Naive thymus-derived CD8-positive, alpha-beta T cell (primary cell): ENCODE measurements at regions of chr10 and their contacts with region 1.

Region 1: DNA sequence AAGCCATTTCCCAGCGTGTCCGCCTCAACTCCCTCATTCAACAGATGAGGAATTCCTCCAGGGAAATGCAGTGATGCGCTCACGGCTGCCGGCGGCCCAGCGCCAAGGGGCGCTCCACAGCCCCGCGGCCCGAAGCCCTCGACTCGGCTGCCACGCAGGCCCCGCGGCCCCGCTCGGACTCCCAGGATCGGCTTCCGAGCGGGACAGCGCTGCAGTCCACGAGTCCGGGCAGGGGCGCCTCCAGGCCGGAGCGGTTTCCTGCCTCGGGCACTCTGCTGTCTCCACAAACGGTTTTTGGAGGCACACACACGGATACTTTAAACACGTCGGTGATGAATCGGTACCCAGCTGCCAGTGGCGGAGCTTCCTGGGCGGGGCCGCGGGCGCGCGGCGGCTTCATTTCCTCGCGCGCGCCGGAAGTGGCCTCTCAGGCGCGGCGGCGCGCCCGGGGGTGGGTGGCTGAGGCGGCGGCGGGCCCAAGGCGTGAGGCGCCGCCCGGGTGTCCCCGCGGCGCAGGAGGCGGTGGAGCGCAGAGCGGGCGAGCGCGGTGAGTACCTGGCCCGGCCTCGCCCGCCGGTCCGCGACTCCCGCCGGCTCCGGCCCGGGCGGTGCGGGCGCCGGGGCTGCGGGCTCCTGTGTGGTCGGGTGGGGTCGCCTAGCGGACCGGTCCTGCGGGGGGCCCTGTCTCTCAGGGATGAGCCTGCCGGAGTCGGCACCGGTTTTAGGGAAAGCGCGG is at the start of gene CSGALNACT2:
- DNase-seq: peak; percentile 79 to 91 (median 86)
- ATAC-seq: peak; percentile 73 to 77
- H3K4me3 Mint-ChIP-seq: peak within 1 kb of the TSS; percentile 93 to 99 (median 97)
- H3K27ac Mint-ChIP-seq: peak within 1 kb of the TSS; percentile 93 to 100 (median 99)
- H3K4me1 Mint-ChIP-seq: peaks cover 25 to 64% (median 52%) of the 10 kb centered on the region in 4 donors
- H3K27me3 Mint-ChIP-seq: no peaks in the 10 kb centered on the region
- polyA plus RNA-seq, gene CSGALNACT2: 15.0 to 20.0 (median 16.2) TPM

Region 2: GRCh38 chr10:42782446-42783180 is 355.6 kb before region 1 on chr10 and contains the start of gene BMS1:
- POLR2A ChIA-PET with region 1: interaction called, 18 read pairs
- DNase-seq: peak; percentile 66 to 93 (median 89)
- ATAC-seq: peak; percentile 92 to 93
- H3K4me3 Mint-ChIP-seq: peak within 1 kb of the TSS; percentile 88 to 99 (median 98)
- H3K27ac Mint-ChIP-seq: peak within 1 kb of the TSS; percentile 91 to 99 (median 96)
- H3K4me1 Mint-ChIP-seq: peaks cover 13 to 48% (median 41%) of the 10 kb centered on the region in 4 donors
- H3K27me3 Mint-ChIP-seq: peaks cover 0 to 5% (median 0%) of the 10 kb centered on the region in 5 donors
- polyA plus RNA-seq, gene BMS1: 9.4 to 19.3 (median 13.6) TPM

Region 3: GRCh38 chr10:43039624-43040481 is 98.3 kb before region 1 on chr10:
- POLR2A ChIA-PET with region 1: no interaction called
- DNase-seq: peak in 1 of 10 donors; percentile 12
- ATAC-seq: peak; percentile 20 to 49
- H3K4me3 Mint-ChIP-seq: no peak overlapping the region
- H3K27ac Mint-ChIP-seq: no peak overlapping the region
- H3K4me1 Mint-ChIP-seq: peaks cover 0 to 15% (median 9%) of the 10 kb centered on the region in 4 donors
- H3K27me3 Mint-ChIP-seq: peaks cover 0 to 3% (median 0%) of the 10 kb centered on the region in 5 donors

Region 4: DNA sequence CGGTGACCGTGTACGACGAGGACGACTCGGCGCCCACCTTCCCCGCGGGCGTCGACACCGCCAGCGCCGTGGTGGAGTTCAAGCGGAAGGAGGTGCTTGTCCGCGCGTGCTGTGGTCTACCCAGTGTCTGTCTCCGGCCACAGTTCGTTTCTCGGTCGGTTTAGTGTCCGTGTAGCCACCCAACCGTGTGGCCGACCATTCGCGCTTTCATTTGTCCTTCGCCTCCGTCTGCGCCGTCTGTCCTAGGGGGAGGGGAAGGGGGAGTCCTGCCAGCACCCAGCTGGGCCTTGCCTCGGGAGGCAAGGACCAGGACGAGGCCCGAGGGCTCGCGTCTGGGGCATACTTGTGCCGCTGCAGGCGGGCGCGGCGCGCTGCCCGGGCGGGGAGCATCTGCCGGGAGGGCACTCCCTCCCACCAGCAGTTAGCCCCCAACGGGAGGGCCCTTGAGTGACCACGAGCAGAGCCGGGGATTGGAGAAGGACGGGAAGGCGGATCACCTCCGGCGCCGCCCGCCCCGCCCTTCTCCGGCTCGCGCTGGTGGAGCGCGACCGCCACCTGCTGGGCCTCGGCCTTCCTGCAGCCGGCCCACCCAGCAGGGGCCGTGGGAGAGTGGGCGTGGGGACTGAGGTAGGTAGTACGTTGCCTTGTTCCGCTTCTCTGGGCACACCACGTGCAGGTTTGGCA is 32.9 kb before region 1 on chr10:
- POLR2A ChIA-PET with region 1: no interaction called
- DNase-seq: peak; percentile 55 to 82 (median 78)
- ATAC-seq: peak; percentile 95
- H3K4me3 Mint-ChIP-seq: peak overlapping the region; percentile 68 to 84 (median 76)
- H3K27ac Mint-ChIP-seq: no peak overlapping the region
- H3K4me1 Mint-ChIP-seq: peaks cover 0 to 11% (median 6%) of the 10 kb centered on the region in 4 donors
- H3K27me3 Mint-ChIP-seq: peaks cover 12 to 28% (median 15%) of the 10 kb centered on the region in 5 donors

Region 5: GRCh38 chr10:43120929-43121314 is 17.3 kb before region 1 on chr10:
- POLR2A ChIA-PET with region 1: interaction called, 113 read pairs
- DNase-seq: peak in 9 of 10 donors; percentile 17 to 75 (median 50)
- ATAC-seq: peak; percentile 94 to 96
- H3K4me3 Mint-ChIP-seq: peak overlapping the region; percentile 25 to 75 (median 56)
- H3K27ac Mint-ChIP-seq: peak overlapping the region; percentile 75 to 94 (median 87)
- H3K4me1 Mint-ChIP-seq: peaks cover 15 to 37% (median 24%) of the 10 kb centered on the region in 4 donors
- H3K27me3 Mint-ChIP-seq: no peaks in the 10 kb centered on the region

Region 6: GRCh38 chr10:43574001-43574892 is 436.1 kb after region 1 on chr10 and contains the start of gene ZNF239:
- POLR2A ChIA-PET with region 1: interaction called, 10 read pairs
- DNase-seq: peak; percentile 65 to 88 (median 78)
- ATAC-seq: peak; percentile 89
- H3K4me3 Mint-ChIP-seq: peak within 1 kb of the TSS; percentile 86 to 94 (median 90)
- H3K27ac Mint-ChIP-seq: peak within 1 kb of the TSS; percentile 89 to 95 (median 92)
- H3K4me1 Mint-ChIP-seq: peaks cover 20 to 60% (median 54%) of the 10 kb centered on the region in 4 donors
- H3K27me3 Mint-ChIP-seq: no peaks in the 10 kb centered on the region
- polyA plus RNA-seq, gene ZNF239: 0.98 to 3.2 (median 1.9) TPM